Head of caudate nucleus (tissue), 42 donors: ENCODE measurements at regions of chr6 and their contacts with region 1.

Region 1: DNA sequence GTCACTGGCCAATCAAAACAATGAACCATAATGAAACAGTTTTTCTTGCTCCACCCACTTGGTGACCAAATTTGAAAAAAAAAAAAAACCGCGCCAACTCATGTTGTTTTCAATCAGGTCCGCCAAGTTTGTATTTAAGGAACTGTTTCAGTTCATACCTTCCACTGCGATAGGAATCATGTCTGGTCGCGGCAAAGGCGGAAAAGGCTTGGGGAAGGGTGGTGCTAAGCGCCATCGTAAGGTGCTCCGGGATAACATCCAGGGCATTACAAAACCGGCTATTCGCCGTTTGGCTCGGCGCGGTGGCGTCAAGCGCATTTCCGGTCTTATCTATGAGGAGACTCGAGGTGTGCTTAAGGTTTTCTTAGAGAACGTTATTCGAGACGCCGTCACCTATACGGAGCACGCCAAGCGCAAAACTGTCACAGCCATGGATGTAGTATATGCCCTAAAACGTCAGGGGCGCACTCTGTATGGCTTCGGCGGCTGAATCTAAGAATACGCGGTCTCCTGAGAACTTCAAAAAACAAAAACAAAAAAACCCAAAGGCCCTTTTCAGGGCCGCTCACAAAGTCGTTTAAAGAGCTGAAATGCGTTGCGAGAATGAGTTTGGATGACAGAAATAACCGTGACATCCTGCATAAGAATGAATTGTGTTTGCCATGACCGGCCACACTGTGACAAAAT is 16.7 kb downstream of the HFE start:
- DNase-seq: peak; percentile 76 to 95 (median 88)

Region 2: GRCh38 chr6:26065952-26066380 is 37.9 kb before region 1 on chr6:
- intact Hi-C with region 1: loop called (anchors 5 kb)
- DNase-seq: peak in 34 of 42 donors; percentile 7 to 83 (median 57)

Region 3: GRCh38 chr6:26123947-26124780 is 20.3 kb after region 1 on chr6:
- intact Hi-C with region 1: loop called (anchors 2 kb)
- DNase-seq: peak in 39 of 42 donors; percentile 29 to 94 (median 75)

Region 4: DNA sequence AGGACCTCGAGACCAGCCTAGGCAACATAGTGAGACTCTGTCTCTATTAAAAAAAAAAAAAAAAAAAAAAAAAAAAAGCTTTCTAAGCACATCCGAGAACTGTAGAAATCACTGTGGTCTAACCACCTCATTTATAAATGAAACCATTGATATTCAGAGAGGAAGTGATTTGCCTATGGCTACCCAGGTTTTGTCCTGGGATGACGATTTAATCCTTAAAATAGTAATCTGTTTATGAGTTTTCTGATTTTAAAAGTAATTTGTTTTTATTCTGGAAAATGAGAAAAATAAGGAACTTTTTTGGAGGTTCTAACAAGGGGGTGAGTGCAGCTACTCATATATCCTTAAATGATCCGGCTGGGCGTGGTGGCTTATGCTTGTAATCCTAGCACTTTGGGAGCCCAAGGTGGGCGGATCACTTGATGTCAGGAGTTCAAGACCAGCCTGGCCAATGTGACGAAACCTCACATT is 254.6 kb after region 1 on chr6:
- intact Hi-C with region 1: no loop called
- DNase-seq: no peak